ENCODE measurements at regions of chr3 and their contacts with region 1.

Region 1: DNA sequence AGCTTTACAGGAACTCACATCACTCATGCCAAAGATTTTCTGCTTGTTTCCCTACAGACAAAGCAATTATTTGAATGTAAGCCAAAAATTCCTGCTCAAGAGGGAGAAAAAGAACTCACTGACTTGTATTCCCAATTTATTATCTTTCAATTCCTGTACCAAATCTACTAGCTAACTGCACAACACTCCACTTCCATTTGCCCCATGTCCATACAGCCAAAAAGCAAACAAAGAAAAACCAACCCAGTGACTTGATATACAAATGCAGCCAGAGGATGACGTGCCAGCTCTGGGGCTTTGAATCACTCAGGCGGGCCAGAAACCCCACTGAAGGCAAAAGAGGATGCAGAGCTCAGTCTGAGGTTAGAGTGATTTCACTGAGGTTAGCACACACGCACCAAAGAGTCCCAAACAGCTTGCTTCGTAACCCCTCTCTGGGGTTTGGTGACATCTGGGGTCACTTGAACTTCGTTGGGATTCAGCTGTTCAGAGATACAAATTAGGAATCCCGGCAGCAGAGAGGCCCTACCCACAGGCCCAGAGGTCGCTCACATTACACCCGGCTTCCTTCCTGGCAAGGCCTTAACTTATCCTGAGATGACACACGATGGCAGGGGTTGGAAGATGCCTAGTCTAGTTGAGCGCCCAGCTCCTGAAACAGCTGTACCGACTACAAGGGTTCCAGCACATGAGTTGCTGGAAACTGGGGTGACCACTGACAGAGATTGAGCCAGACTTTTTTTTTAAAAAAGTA is 1.6 kb downstream of the RFTN1 start:
- DNase-seq: peak; percentile 68
- ATAC-seq: peak; percentile 69
- H3K4me3 Mint-ChIP-seq: peak overlapping the region; percentile 79
- H3K27ac Mint-ChIP-seq: peak overlapping the region; percentile 87
- H3K4me1 Mint-ChIP-seq: peaks cover 67% of the 10 kb centered on the region
- H3K27me3 Mint-ChIP-seq: no peaks in the 10 kb centered on the region

Region 2: DNA sequence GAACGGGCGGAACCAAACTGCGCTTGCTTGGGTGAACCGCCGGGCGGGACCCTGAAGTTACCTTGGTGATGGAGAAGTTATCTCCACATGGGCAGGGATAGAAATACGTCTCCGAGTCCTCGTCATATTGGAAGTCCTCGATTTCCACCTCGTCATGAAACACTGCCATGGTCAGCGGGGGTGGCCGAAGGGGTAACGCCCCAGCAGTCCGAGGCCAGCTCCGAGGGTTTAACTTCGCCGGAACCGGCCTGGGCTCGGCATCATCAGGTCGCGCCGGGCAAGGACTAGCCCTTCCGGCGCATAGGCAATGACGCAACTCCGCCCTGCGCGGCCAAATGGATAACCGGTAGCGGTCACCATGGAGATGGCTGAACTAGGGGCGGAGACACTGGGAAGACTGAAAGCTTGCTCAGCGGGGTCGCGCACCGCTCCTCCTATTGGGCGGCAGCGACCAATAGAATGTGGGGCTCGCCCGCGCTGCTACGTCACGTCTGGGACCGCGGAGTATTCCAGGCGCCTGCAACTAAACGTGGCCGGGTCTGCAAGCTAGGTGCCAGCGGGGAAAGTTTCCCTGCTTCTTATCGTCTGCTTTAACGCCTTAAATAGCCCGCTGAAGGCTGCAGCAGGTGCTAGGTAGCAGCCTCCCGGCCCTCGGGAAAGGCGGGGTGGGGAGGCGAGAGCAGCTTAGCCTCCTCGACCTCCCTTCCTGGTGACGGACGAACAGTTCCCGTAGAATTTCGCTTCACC is 247.0 kb before region 1 on chr3 and contains the starts of genes DPH3 and OXNAD1:
- POLR2A ChIA-PET with region 1: interaction called, 14 read pairs
- DNase-seq: peak; percentile 99
- ATAC-seq: peak; percentile 96
- H3K4me3 Mint-ChIP-seq: peak within 1 kb of the TSS; percentile 97
- H3K27ac Mint-ChIP-seq: peak within 1 kb of the TSS; percentile 96
- H3K4me1 Mint-ChIP-seq: peaks cover 27% of the 10 kb centered on the region
- H3K27me3 Mint-ChIP-seq: no peaks in the 10 kb centered on the region
- total RNA-seq, gene DPH3: 12.1 to 14.9 TPM
- total RNA-seq, gene OXNAD1: 76.8 to 77.1 TPM

Region 3: GRCh38 chr3:16482770-16483531 is 28.9 kb before region 1 on chr3:
- POLR2A ChIA-PET with region 1: interaction called, 13 read pairs
- DNase-seq: peak; percentile 46
- ATAC-seq: peak; percentile 92
- H3K4me3 Mint-ChIP-seq: peak overlapping the region; percentile 70
- H3K27ac Mint-ChIP-seq: peak overlapping the region; percentile 89
- H3K4me1 Mint-ChIP-seq: peaks cover 52% of the 10 kb centered on the region
- H3K27me3 Mint-ChIP-seq: no peaks in the 10 kb centered on the region

Region 4: GRCh38 chr3:16538507-16538906 is 26.6 kb after region 1 on chr3:
- POLR2A ChIA-PET with region 1: no interaction called
- DNase-seq: no peak
- ATAC-seq: no peak
- H3K4me3 Mint-ChIP-seq: no peak overlapping the region
- H3K27ac Mint-ChIP-seq: no peak overlapping the region
- H3K4me1 Mint-ChIP-seq: no peaks in the 10 kb centered on the region
- H3K27me3 Mint-ChIP-seq: peaks cover 35% of the 10 kb centered on the region

Measured in activated naive CD8-positive, alpha-beta T cell treated with anti-CD3 and anti-CD28 coated beads, Interleukin-2, amount 10 ng/mL, durations not matched to agents 7 days and 5 days (primary cell).